Dendritic cell treated with granulocyte-macrophage colony-stimulating factor and Interleukin-4, amounts not matched to agents 40 ng/mL and 50 ng/mL, for 4 days (primary cell): ENCODE measurements at regions of chr2 and their contacts with region 1.

Region 1: DNA sequence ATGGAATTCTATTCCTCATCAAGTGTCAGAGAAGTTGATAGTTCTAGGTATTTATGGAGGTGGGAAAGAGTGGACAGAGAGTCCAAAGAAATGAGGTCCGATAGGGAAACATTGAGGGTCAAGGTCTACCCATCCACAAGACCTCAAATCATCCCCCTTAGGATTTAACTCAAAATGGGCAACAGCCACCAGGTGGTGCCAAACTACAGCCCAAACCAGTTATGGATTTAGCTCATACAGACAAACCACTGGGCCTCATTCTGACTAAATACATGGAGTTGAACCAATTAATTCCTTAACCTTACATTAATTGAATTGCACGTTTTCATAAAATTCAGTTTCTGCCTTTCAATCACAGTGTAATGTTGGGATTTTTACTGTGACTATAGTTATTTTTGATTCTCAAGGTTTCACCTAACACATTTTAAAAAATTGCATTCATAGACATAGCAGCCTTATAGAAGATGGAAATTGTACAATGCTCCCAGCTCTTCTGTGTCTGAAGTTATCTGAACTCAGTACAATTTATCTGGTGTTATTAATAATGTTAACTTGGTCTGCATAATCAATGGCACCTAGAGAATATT is 98.2 kb upstream of the HNMT start:
- H3K4me3 Mint-ChIP-seq: no peak overlapping the region
- H3K27ac Mint-ChIP-seq: no peak overlapping the region
- H3K4me1 Mint-ChIP-seq: no peaks in the 10 kb centered on the region
- H3K27me3 Mint-ChIP-seq: no peaks in the 10 kb centered on the region

Region 2: GRCh38 chr2:137249463-137250130 is 616.5 kb before region 1 on chr2:
- intact Hi-C with region 1: no loop called
- H3K4me3 Mint-ChIP-seq: no peak overlapping the region
- H3K27ac Mint-ChIP-seq: no peak overlapping the region
- H3K4me1 Mint-ChIP-seq: no peaks in the 10 kb centered on the region
- H3K27me3 Mint-ChIP-seq: no peaks in the 10 kb centered on the region

Region 3: GRCh38 chr2:138373993-138374408 is 508.0 kb after region 1 on chr2:
- intact Hi-C with region 1: loop called (anchors 5 kb)
- H3K4me3 Mint-ChIP-seq: no peak overlapping the region
- H3K27ac Mint-ChIP-seq: no peak overlapping the region
- H3K4me1 Mint-ChIP-seq: no peaks in the 10 kb centered on the region
- H3K27me3 Mint-ChIP-seq: no peaks in the 10 kb centered on the region

Region 4: DNA sequence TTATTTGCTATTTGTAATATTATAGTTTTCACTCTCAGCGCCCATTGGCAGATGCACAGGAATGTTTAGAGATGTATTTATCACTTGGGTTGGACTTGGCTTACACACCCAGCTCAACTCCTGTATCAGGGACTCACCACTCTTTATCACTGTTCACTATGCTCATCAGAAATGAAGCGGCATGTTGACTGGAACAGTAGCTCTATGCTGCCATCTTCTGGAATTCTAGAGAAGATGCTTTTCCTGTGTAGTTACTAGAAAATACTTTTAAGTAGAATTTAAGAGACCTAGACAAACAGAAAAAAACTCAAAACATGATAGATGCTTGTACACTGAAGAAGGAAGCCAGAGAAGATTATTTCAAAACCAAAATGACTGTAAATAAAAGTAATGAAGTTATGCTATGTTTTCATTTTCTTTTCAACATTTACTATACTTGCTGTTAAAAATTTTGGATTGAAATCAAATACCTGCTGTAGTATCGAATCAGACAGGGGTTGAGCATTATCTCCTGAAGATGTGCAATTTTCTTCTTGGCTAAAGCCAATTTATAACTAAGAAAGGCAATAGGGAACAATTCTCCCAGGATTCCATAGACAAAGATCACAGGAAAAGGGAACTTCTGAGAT is 961.5 kb after region 1 on chr2:
- intact Hi-C with region 1: loop called (anchors 2 kb)
- H3K4me3 Mint-ChIP-seq: no peak overlapping the region
- H3K27ac Mint-ChIP-seq: no peak overlapping the region
- H3K4me1 Mint-ChIP-seq: peaks cover 5% of the 10 kb centered on the region
- H3K27me3 Mint-ChIP-seq: no peaks in the 10 kb centered on the region